ENCODE measurements at regions of chr6 and their contacts with region 1.

Region 1: GRCh38 chr6:116030770-116031169 is 29.9 kb downstream of the FRK start:
- DNase-seq: no peak
- H3K4me3 ChIP-seq: no peak overlapping the region
- CTCF ChIP-seq: no peak

Region 2: GRCh38 chr6:115922971-115923370 is 107.8 kb before region 1 on chr6:
- CTCF ChIA-PET with region 1: no interaction called
- POLR2A ChIA-PET with region 1: no interaction called
- DNase-seq: no peak
- H3K4me3 ChIP-seq: no peak overlapping the region
- CTCF ChIP-seq: no peak

Region 3: DNA sequence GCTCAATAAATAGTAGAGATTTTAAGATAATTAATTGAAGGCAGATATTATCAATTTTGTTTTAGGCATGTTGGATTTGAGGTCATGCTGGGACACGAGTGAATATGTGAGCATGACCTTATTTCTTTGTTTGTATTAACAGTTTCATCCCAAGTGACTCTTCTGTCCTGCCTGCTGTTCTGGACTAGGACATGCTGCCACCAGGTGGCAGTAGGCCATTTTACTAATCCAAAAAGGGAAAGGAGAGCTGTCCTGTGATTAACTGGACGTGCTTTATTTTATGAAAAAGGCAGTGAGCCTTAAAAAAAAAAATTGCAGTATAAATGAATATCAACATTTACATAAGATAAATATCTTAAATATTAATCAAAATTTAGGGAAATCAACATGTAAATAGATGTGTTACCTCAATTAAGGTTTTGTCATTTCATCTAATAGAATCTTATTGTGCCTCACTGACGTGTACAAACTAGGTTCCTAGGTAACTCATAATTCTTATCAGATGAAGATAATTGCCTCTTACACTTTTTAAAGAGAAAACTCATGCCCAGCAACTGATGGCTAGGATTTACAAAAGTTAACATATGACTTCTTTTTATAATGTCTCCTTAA is 19.9 kb before region 1 on chr6:
- CTCF ChIA-PET with region 1: interaction called, 15 read pairs
- POLR2A ChIA-PET with region 1: no interaction called
- DNase-seq: peak; percentile 12
- H3K4me3 ChIP-seq: no peak overlapping the region
- CTCF ChIP-seq: peak; percentile 75